Calu3 (cell line): ENCODE measurements at regions of chr7 and their contacts with region 1.

Region 1: GRCh38 chr7:90211391-90212148 is at the start of gene STEAP2:
- DNase-seq: peak; percentile 90
- H3K4me3 Mint-ChIP-seq: no peak within 1 kb of the TSS
- H3K27ac Mint-ChIP-seq: peak within 1 kb of the TSS; percentile 94
- H3K4me1 Mint-ChIP-seq: peaks cover 8% of the 10 kb centered on the region
- H3K27me3 Mint-ChIP-seq: no peaks in the 10 kb centered on the region
- CTCF ChIP-seq: peak; percentile 54
- total RNA-seq, gene STEAP2: 38.5 and 38.7 TPM in 2 replicates

Region 2: GRCh38 chr7:90173127-90173844 is 38.3 kb before region 1 on chr7:
- CTCF ChIA-PET with region 1: interaction called, 6 read pairs
- intact Hi-C with region 1: loop called (anchors 5 kb)
- DNase-seq: no peak
- H3K4me3 Mint-ChIP-seq: peak overlapping the region; percentile 44
- H3K27ac Mint-ChIP-seq: peak overlapping the region; percentile 76
- H3K4me1 Mint-ChIP-seq: peaks cover 29% of the 10 kb centered on the region
- H3K27me3 Mint-ChIP-seq: no peaks in the 10 kb centered on the region
- CTCF ChIP-seq: no peak

Region 3: GRCh38 chr7:90180011-90180585 is 31.5 kb before region 1 on chr7:
- CTCF ChIA-PET with region 1: interaction called, 3 read pairs
- intact Hi-C with region 1: loop called (anchors 2 kb)
- DNase-seq: no peak
- H3K4me3 Mint-ChIP-seq: no peak overlapping the region
- H3K27ac Mint-ChIP-seq: peak overlapping the region; percentile 95
- H3K4me1 Mint-ChIP-seq: peaks cover 18% of the 10 kb centered on the region
- H3K27me3 Mint-ChIP-seq: no peaks in the 10 kb centered on the region
- CTCF ChIP-seq: no peak

Region 4: GRCh38 chr7:90229682-90230081 is 18.1 kb after region 1 on chr7:
- CTCF ChIA-PET with region 1: interaction called, 4 read pairs
- intact Hi-C with region 1: loop called (anchors 2 kb)
- DNase-seq: no peak
- H3K4me3 Mint-ChIP-seq: peak overlapping the region; percentile 66
- H3K27ac Mint-ChIP-seq: peak overlapping the region; percentile 96
- H3K4me1 Mint-ChIP-seq: peaks cover 26% of the 10 kb centered on the region
- H3K27me3 Mint-ChIP-seq: no peaks in the 10 kb centered on the region
- CTCF ChIP-seq: no peak

Region 5: GRCh38 chr7:90250601-90251303 is 39.2 kb after region 1 on chr7:
- CTCF ChIA-PET with region 1: no interaction called
- intact Hi-C with region 1: no loop called
- DNase-seq: no peak
- H3K4me3 Mint-ChIP-seq: no peak overlapping the region
- H3K27ac Mint-ChIP-seq: no peak overlapping the region
- H3K4me1 Mint-ChIP-seq: peaks cover 17% of the 10 kb centered on the region
- H3K27me3 Mint-ChIP-seq: no peaks in the 10 kb centered on the region
- CTCF ChIP-seq: no peak